ENCODE measurements at regions of chr2 and their contacts with region 1.

Region 1: GRCh38 chr2:64988420-64989125 is 626 bp upstream of the SLC1A4 start:
- DNase-seq: peak; percentile 74
- ATAC-seq: peak; percentile 37
- H3K4me3 Mint-ChIP-seq: peak overlapping the region; percentile 68
- H3K27ac Mint-ChIP-seq: peak overlapping the region; percentile 55
- H3K4me1 Mint-ChIP-seq: peaks cover 46% of the 10 kb centered on the region
- H3K27me3 Mint-ChIP-seq: peaks cover 4% of the 10 kb centered on the region

Region 2: GRCh38 chr2:64018923-64019718 is 969.5 kb before region 1 on chr2 and contains the start of gene VPS54:
- CTCF ChIA-PET with region 1: no interaction called
- POLR2A ChIA-PET with region 1: no interaction called
- intact Hi-C with region 1: loop called in 1 of 2 experiments (anchors 10 kb)
- DNase-seq: peak; percentile 74
- ATAC-seq: peak; percentile 80
- H3K4me3 Mint-ChIP-seq: peak within 1 kb of the TSS; percentile 99
- H3K27ac Mint-ChIP-seq: peak within 1 kb of the TSS; percentile 98
- H3K4me1 Mint-ChIP-seq: peaks cover 37% of the 10 kb centered on the region
- H3K27me3 Mint-ChIP-seq: no peaks in the 10 kb centered on the region
- total RNA-seq, gene VPS54: 9.0 to 11.7 TPM

Region 3: DNA sequence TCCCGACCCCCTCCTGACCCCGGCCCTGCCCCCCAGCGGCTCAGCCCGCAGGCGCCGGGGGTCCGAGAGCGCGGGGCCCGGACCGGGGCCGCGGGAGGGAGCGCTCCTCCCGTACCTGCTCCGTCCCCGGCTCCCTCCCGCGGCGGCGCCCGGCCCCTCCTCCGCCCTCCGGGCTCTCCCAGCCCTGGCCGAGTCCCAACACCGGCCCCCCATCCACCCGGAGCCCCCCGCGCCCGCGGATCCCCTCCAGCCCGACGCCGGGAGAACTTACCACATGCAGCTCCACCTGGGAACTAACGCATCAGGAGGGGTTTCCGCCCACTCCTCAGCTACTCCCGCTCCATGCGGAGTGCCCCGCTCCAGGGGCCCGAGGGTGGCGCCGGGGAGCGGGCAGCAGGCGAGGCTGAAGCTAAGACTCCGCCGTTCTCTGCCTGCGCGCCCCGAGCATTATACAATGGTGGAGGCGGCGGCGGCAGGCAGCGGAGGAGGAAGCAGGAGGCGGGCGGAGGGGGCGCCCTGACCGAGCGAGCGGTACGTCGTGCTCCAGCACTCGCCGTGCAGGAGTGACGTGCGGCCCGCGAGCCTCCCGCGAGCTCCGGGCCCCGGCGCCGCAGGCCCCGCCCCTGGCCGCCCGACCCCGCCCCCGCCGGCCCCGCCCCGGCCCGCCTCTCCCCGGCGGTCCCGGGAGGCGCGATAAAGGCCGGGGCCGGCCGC is 335.1 kb before region 1 on chr2 and contains the start of gene SERTAD2:
- CTCF ChIA-PET with region 1: no interaction called
- POLR2A ChIA-PET with region 1: no interaction called
- intact Hi-C with region 1: loop called in 1 of 2 experiments (anchors 2 kb)
- DNase-seq: peak; percentile 90
- ATAC-seq: peak; percentile 80
- H3K4me3 Mint-ChIP-seq: peak within 1 kb of the TSS; percentile 85
- H3K27ac Mint-ChIP-seq: peak within 1 kb of the TSS; percentile 94
- H3K4me1 Mint-ChIP-seq: peaks cover 76% of the 10 kb centered on the region
- H3K27me3 Mint-ChIP-seq: no peaks in the 10 kb centered on the region
- total RNA-seq, gene SERTAD2: 14.5 to 14.9 TPM

Region 4: GRCh38 chr2:64797881-64798575 is 190.5 kb before region 1 on chr2:
- CTCF ChIA-PET with region 1: no interaction called
- POLR2A ChIA-PET with region 1: no interaction called
- intact Hi-C with region 1: no loop called
- DNase-seq: no peak
- ATAC-seq: no peak
- H3K4me3 Mint-ChIP-seq: no peak overlapping the region
- H3K27ac Mint-ChIP-seq: no peak overlapping the region
- H3K4me1 Mint-ChIP-seq: no peaks in the 10 kb centered on the region
- H3K27me3 Mint-ChIP-seq: peaks cover 2% of the 10 kb centered on the region

Region 5: GRCh38 chr2:64945973-64946768 is 42.4 kb before region 1 on chr2:
- CTCF ChIA-PET with region 1: no interaction called
- POLR2A ChIA-PET with region 1: no interaction called
- intact Hi-C with region 1: loop called (anchors 2 kb)
- DNase-seq: peak; percentile 78
- ATAC-seq: peak; percentile 98
- H3K4me3 Mint-ChIP-seq: peak overlapping the region; percentile 50
- H3K27ac Mint-ChIP-seq: peak overlapping the region; percentile 89
- H3K4me1 Mint-ChIP-seq: peaks cover 30% of the 10 kb centered on the region
- H3K27me3 Mint-ChIP-seq: no peaks in the 10 kb centered on the region

Region 6: DNA sequence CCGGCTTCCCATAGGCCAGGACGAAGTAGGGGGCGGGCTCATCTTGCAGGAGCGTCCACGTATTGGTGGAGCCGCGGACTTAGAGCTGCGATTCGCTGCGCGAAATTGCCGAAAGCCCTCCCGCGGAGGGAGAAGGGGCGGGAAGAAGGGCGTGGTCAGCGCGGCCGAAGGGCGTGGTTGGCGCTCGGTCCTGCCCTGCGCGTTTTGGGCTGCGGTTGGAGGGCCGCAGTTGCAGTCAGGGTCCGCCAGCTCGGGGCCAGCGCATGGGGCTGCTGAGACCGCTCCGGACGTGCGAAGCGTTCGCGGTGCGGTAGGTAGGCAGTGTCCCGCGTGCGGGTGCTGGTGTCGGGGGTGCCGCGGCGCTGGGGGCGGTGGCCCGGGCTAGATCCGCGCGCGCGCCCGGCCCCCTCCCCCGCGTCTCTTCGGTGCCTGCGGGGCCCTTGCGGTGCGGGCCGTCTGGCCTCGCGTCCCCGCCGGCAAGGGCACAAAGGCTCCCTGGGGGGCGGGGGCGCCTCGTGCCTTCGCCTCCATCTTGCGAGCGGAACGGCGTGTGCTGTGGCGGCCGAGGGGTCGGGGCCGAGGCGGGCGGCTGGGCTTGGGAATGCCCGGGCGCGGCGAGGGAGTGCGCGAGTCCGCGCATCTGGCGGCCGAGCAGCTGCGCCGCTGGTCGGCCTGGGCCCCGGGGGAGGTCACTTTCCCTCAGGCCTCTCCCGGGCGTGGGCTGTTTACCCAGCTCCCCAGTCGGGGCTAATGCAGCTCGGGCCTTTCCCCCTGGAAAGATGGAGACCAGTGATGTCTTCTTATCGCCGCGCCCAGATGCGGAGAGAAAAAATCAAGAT is 67.9 kb after region 1 on chr2 and contains the start of gene CEP68:
- CTCF ChIA-PET with region 1: interaction called, 3 read pairs
- POLR2A ChIA-PET with region 1: interaction called, 3 read pairs
- intact Hi-C with region 1: loop called (anchors 1 kb)
- DNase-seq: peak; percentile 98
- ATAC-seq: peak; percentile 94
- H3K4me3 Mint-ChIP-seq: peak within 1 kb of the TSS; percentile 93
- H3K27ac Mint-ChIP-seq: peak within 1 kb of the TSS; percentile 84
- H3K4me1 Mint-ChIP-seq: peaks cover 55% of the 10 kb centered on the region
- H3K27me3 Mint-ChIP-seq: no peaks in the 10 kb centered on the region
- total RNA-seq, gene CEP68: 4.9 to 6.0 TPM

Region 7: GRCh38 chr2:65300761-65301711 is 312.5 kb after region 1 on chr2:
- CTCF ChIA-PET with region 1: no interaction called
- POLR2A ChIA-PET with region 1: no interaction called
- intact Hi-C with region 1: loop called in 1 of 2 experiments (anchors 2 kb)
- DNase-seq: peak; percentile 90
- ATAC-seq: peak; percentile 92
- H3K4me3 Mint-ChIP-seq: peak overlapping the region; percentile 52
- H3K27ac Mint-ChIP-seq: peak overlapping the region; percentile 79
- H3K4me1 Mint-ChIP-seq: peaks cover 48% of the 10 kb centered on the region
- H3K27me3 Mint-ChIP-seq: peaks cover 13% of the 10 kb centered on the region

Region 8: GRCh38 chr2:65647249-65647842 is 658.8 kb after region 1 on chr2:
- CTCF ChIA-PET with region 1: no interaction called
- POLR2A ChIA-PET with region 1: no interaction called
- intact Hi-C with region 1: no loop called
- DNase-seq: no peak
- ATAC-seq: no peak
- H3K4me3 Mint-ChIP-seq: no peak overlapping the region
- H3K27ac Mint-ChIP-seq: no peak overlapping the region
- H3K4me1 Mint-ChIP-seq: no peaks in the 10 kb centered on the region
- H3K27me3 Mint-ChIP-seq: no peaks in the 10 kb centered on the region